Endothelial cell of umbilical vein (primary cell): ENCODE measurements at regions of chr14 and their contacts with region 1.

Region 1: GRCh38 chr14:74084277-74085046 is at the starts of genes ALDH6A1 and LIN52:
- DNase-seq: peak; percentile 100
- H3K4me3 ChIP-seq: peak within 1 kb of the TSS; percentile 34 to 87 (median 73)
- H3K27ac ChIP-seq: peak within 1 kb of the TSS; percentile 57
- H3K4me1 ChIP-seq: peaks cover 33% of the 10 kb centered on the region
- H3K27me3 ChIP-seq: no peaks in the 10 kb centered on the region
- CTCF ChIP-seq: peak in 1 of 2 donors; percentile 25
- POLR2A ChIP-seq: peak; percentile 55
- total RNA-seq, gene ALDH6A1: 7.3 and 10.2 TPM in 2 replicates
- total RNA-seq, gene LIN52: 9.7 and 10.5 TPM in 2 replicates

Region 2: DNA sequence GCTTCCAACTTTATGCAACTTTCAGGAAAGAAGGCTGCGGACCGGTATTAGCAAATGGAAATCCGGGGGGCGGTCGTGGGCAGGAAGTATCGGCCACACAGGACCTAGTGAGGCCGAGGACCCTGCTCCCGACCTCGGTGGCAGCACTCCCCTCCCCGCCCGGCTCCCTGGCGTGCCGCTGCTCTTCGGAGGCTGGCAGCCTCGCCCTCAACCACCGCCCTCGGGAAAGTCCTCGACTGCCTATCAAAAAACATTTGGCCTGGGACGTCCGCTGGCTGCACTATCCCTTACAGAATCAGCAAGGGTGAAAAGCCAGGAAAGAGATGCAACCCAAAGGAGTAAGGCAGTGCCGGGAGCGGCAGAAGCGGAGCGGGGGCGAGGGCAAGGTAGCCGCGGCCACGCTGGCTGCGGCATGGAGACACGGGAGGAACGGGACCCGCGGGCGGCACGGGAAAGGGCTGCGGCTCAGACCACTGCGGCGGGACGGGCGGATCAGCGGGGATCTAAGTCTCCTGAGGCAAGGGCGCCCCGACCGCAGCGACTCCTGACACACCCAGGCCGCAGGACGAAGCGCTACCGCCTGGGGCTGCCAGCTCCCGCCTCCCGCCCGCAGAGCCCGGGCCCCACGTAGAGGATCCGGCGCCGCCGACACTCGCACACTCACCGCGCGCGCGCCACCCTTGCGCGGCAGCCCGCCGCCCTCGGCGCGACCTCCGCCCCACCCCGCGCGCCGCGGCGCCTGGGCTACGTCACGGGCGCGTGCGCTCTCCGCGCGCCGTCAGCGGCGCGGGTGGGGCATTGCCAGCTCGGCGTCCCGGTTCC is 65.7 kb before region 1 on chr14 and contains the starts of genes BBOF1 and ENTPD5:
- CTCF ChIA-PET with region 1: no interaction called
- POLR2A ChIA-PET with region 1: no interaction called
- dilution Hi-C with region 1: no loop called
- intact Hi-C with region 1: loop called (anchors 1 kb)
- DNase-seq: peak; percentile 83
- H3K4me3 ChIP-seq: peak within 1 kb of the TSS; percentile 76 to 97 (median 83)
- H3K27ac ChIP-seq: peak within 1 kb of the TSS; percentile 86
- H3K4me1 ChIP-seq: peaks cover 13% of the 10 kb centered on the region
- H3K27me3 ChIP-seq: no peaks in the 10 kb centered on the region
- CTCF ChIP-seq: peak in 1 of 2 donors; percentile 2
- POLR2A ChIP-seq: peak; percentile 93
- total RNA-seq, gene BBOF1: 2.2 and 2.3 TPM in 2 replicates
- total RNA-seq, gene ENTPD5: 13.0 and 14.7 TPM in 2 replicates

Region 3: GRCh38 chr14:74065746-74066575 is 18.5 kb before region 1 on chr14:
- CTCF ChIA-PET with region 1: interaction called, 7 read pairs
- POLR2A ChIA-PET with region 1: no interaction called
- dilution Hi-C with region 1: no loop called
- intact Hi-C with region 1: loop called (anchors 1 kb)
- DNase-seq: peak; percentile 39
- H3K4me3 ChIP-seq: no peak overlapping the region
- H3K27ac ChIP-seq: no peak overlapping the region
- H3K4me1 ChIP-seq: peaks cover 30% of the 10 kb centered on the region
- H3K27me3 ChIP-seq: no peaks in the 10 kb centered on the region
- CTCF ChIP-seq: no peak
- POLR2A ChIP-seq: no peak